Activated CD8-positive, alpha-beta memory T cell treated with anti-CD3 and anti-CD28 coated beads, Interleukin-2, amount 10 ng/mL, durations not matched to agents 7 days and 5 days (primary cell): ENCODE measurements at regions of chrX and their contacts with region 1.

Region 1: GRCh38 chrX:107716816-107717700 is 58.5 kb downstream of the TSC22D3 start:
- DNase-seq: peak; percentile 93
- ATAC-seq: peak; percentile 72
- H3K4me3 Mint-ChIP-seq: peak overlapping the region; percentile 96
- H3K27ac Mint-ChIP-seq: peak overlapping the region; percentile 94
- H3K4me1 Mint-ChIP-seq: peaks cover 46% of the 10 kb centered on the region
- H3K27me3 Mint-ChIP-seq: no peaks in the 10 kb centered on the region

Region 2: GRCh38 chrX:107654872-107655761 is 61.9 kb before region 1 on chrX:
- CTCF ChIA-PET with region 1: interaction called, 13 read pairs
- DNase-seq: peak; percentile 70
- ATAC-seq: peak; percentile 90
- H3K4me3 Mint-ChIP-seq: no peak overlapping the region
- H3K27ac Mint-ChIP-seq: no peak overlapping the region
- H3K4me1 Mint-ChIP-seq: peaks cover 12% of the 10 kb centered on the region
- H3K27me3 Mint-ChIP-seq: no peaks in the 10 kb centered on the region

Region 3: GRCh38 chrX:107672955-107673378 is 44.1 kb before region 1 on chrX:
- CTCF ChIA-PET with region 1: interaction called, 261 read pairs
- DNase-seq: peak; percentile 84
- ATAC-seq: peak; percentile 41
- H3K4me3 Mint-ChIP-seq: peak overlapping the region; percentile 48
- H3K27ac Mint-ChIP-seq: peak overlapping the region; percentile 92
- H3K4me1 Mint-ChIP-seq: peaks cover 45% of the 10 kb centered on the region
- H3K27me3 Mint-ChIP-seq: no peaks in the 10 kb centered on the region

Region 4: DNA sequence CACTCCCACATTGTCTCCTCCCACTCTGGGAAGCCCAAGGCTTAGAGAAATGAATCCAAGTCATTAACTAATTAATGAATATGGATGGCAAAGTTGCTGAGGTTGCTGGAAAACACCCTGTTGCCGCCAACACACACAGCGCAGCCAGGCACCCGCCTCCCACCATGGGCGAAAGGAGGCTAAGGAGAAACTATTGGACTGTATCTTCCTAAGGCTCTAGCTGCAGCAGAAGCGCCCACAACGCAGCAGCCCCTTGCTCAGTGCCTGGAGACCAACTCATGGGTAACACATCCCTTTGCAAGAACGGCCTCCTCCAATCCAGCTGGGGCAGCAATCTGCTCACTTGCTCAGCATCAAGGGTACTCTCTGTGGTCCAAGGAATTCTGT is 24.3 kb after region 1 on chrX:
- CTCF ChIA-PET with region 1: interaction called, 14 read pairs
- DNase-seq: no peak
- ATAC-seq: peak; percentile 5
- H3K4me3 Mint-ChIP-seq: peak overlapping the region; percentile 68
- H3K27ac Mint-ChIP-seq: peak overlapping the region; percentile 98
- H3K4me1 Mint-ChIP-seq: peaks cover 14% of the 10 kb centered on the region
- H3K27me3 Mint-ChIP-seq: no peaks in the 10 kb centered on the region

Region 5: GRCh38 chrX:107823456-107823855 is 106.4 kb after region 1 on chrX:
- CTCF ChIA-PET with region 1: no interaction called
- DNase-seq: no peak
- ATAC-seq: no peak
- H3K4me3 Mint-ChIP-seq: no peak overlapping the region
- H3K27ac Mint-ChIP-seq: no peak overlapping the region
- H3K4me1 Mint-ChIP-seq: peaks cover 20% of the 10 kb centered on the region
- H3K27me3 Mint-ChIP-seq: peaks cover 3% of the 10 kb centered on the region

Region 6: GRCh38 chrX:107871136-107871535 is 154.1 kb after region 1 on chrX:
- CTCF ChIA-PET with region 1: no interaction called
- DNase-seq: no peak
- ATAC-seq: no peak
- H3K4me3 Mint-ChIP-seq: no peak overlapping the region
- H3K27ac Mint-ChIP-seq: no peak overlapping the region
- H3K4me1 Mint-ChIP-seq: peaks cover 1% of the 10 kb centered on the region
- H3K27me3 Mint-ChIP-seq: no peaks in the 10 kb centered on the region